ENCODE measurements at regions of chr3 and their contacts with region 1.

Region 1: DNA sequence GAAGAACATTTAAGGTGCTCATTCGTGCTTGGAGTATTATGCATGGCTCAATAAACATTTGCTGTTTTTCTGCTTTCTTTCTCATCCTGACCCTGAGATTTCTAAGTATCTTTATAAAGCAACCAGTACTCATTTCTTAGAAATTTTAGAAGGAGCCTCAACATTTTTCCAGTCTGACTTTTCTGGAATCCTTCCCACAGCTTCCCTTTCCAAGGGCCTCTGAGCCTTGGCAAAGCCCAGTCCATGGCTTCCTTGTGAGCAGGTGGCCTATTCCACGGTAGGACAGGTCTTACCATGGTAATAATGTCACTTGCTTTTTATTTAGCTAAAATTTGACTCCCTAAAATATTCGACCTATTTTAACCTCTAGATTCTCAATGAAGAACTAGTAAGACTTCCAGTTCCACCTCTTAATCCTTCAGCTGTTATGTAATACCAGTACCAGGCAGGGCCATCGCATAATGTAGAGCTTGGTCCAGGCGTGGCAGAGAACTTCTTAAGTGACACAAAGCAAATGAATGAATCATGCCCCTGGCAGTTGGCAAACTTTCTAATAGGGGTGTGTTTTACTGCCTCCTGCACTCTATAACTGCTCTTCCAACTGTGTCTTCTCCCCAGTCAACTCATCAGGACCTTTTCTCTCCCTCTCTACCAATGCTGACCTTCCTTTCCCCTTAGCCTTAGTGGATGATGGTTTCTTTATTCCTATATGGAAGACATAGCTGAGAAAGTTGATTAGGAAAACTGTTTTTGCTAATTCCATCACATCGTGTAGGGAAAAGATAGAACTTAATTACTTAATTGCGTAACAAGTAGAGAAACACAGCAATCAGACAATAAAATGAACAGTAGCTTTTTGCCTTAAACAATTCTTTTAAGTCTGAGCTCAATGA is 894 bp upstream of the TM4SF4 start:
- DNase-seq: peak; percentile 88 to 99
- H3K4me3 ChIP-seq: 0 out of 2 replicates have a peak overlapping the region, but pooled peaks have one; percentile 10
- H3K27ac ChIP-seq: peak overlapping the region; percentile 73
- H3K4me1 ChIP-seq: peaks cover 47% of the 10 kb centered on the region
- H3K27me3 ChIP-seq: no peaks in the 10 kb centered on the region
- CTCF ChIP-seq: no peak

Region 2: DNA sequence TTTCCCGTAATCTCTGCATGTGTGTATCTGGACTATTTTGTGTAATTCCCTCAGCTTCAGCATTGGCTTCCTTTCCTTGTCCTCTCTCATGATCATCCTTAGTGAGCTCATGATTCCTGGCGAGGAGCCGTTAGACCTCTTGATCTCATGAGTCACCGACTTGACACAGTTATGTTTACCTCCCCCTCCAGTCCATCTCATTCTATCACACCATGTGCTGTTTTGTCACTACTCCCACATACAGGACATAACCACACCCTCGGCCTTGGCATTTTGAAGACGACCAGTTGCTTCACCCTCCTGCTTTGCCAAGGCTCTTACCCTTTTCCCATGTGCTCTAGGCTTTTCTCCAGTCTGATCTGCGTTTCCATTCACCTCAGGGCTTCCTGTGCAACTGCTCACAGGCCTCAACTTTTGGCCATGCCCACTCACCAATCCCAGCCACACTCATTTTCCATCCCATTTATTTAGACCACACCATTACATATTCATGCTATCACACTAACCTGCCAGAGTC is 293.5 kb before region 1 on chr3:
- CTCF ChIA-PET with region 1: interaction called, 5 read pairs
- POLR2A ChIA-PET with region 1: interaction called, 10 read pairs
- intact Hi-C with region 1: no loop called
- DNase-seq: peak; percentile 53 to 73
- H3K4me3 ChIP-seq: no peak overlapping the region
- H3K27ac ChIP-seq: peak overlapping the region; percentile 30; the same call in 1 of the 2 replicates
- H3K4me1 ChIP-seq: peaks cover 11% of the 10 kb centered on the region
- H3K27me3 ChIP-seq: no peaks in the 10 kb centered on the region
- CTCF ChIP-seq: no peak

Region 3: GRCh38 chr3:149448331-149448831 is 25.2 kb before region 1 on chr3:
- CTCF ChIA-PET with region 1: interaction called, 4 read pairs
- POLR2A ChIA-PET with region 1: no interaction called
- intact Hi-C with region 1: loop called (anchors 1 kb)
- DNase-seq: peak; percentile 22 to 81
- H3K4me3 ChIP-seq: no peak overlapping the region
- H3K27ac ChIP-seq: peak overlapping the region; percentile 81
- H3K4me1 ChIP-seq: peaks cover 36% of the 10 kb centered on the region
- H3K27me3 ChIP-seq: no peaks in the 10 kb centered on the region
- CTCF ChIP-seq: no peak